Activated CD4-positive, alpha-beta T cell treated with anti-CD3 and anti-CD28 coated beads for 36 hours (primary cell): ENCODE measurements at regions of chr7 and their contacts with region 1.

Region 1: GRCh38 chr7:144437370-144438191 is 34.1 kb upstream of the NOBOX start:
- DNase-seq: peak; percentile 75
- ATAC-seq: peak; percentile 86
- H3K4me3 Mint-ChIP-seq: no peak overlapping the region
- H3K27ac Mint-ChIP-seq: no peak overlapping the region
- H3K4me1 Mint-ChIP-seq: no peaks in the 10 kb centered on the region
- H3K27me3 Mint-ChIP-seq: no peaks in the 10 kb centered on the region

Region 2: DNA sequence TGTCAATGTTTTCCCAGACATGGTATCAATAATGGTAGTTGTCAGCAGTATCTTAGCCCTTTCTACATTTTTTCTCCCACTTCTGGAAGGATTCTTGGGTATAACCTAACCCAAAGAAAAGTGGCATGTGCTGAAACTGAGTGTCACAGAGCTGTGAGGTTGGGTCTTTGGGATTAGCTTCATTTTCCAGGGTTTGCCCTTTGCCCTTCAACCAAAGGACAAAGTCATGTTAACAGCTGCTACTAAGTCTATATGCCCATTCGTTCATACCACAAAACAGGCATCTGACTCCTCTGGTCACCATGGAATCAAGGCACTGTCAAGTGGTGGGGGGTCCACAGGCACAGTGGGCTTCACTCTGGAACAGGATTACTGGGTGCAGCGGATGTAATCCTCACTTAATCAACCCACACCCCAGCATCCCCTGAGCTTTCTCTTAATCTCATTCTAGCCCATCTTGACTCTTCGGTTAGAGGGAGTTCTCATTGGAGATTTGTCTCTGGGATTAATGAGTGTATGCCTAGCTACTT is 709.2 kb before region 1 on chr7:
- CTCF ChIA-PET with region 1: no interaction called
- POLR2A ChIA-PET with region 1: no interaction called
- intact Hi-C with region 1: no loop called
- DNase-seq: no peak
- ATAC-seq: no peak
- H3K4me3 Mint-ChIP-seq: no peak overlapping the region
- H3K27ac Mint-ChIP-seq: no peak overlapping the region
- H3K4me1 Mint-ChIP-seq: peaks cover under 1% of the 10 kb centered on the region
- H3K27me3 Mint-ChIP-seq: no peaks in the 10 kb centered on the region

Region 3: GRCh38 chr7:144174613-144175012 is 263.0 kb before region 1 on chr7:
- CTCF ChIA-PET with region 1: interaction called, 3 read pairs
- POLR2A ChIA-PET with region 1: no interaction called
- intact Hi-C with region 1: loop called in 1 of 2 experiments (anchors 5 kb)
- DNase-seq: no peak
- ATAC-seq: no peak
- H3K4me3 Mint-ChIP-seq: no peak overlapping the region
- H3K27ac Mint-ChIP-seq: no peak overlapping the region
- H3K4me1 Mint-ChIP-seq: no peaks in the 10 kb centered on the region
- H3K27me3 Mint-ChIP-seq: peaks cover 5% of the 10 kb centered on the region

Region 4: DNA sequence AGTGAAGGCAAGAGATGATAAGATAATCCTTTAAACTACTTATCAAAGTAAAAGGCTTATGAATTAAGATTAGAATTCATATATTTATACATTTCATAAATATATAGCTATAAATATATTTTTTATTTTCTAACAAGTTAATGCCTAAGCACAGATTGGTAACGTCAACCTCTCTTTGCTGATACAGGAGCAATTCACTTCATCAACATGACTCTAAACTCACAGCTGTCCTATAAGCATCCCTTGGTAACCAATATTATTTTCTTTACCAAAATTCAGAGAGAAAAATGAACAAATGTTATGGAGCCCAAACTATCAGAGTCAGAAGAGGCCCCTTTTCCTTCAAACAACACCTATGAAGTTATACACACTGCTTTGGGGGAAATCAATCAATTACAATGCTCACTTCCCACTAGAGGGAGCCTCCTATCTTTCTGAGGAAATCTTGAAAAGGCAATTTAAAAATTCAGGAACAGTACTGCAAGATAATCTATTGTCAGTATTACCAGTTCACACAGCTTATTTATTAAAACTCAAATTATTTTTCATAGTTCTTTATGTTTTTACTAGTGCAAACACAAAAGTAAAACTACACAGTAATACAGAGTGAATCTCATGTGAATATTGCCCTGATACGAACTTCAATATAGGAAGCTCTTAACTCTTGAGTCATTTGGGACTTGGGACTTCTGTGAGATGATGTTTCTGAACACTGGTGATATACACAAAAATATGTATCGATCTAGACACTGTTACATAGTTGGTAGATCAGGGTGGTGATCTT is 16.9 kb after region 1 on chr7:
- CTCF ChIA-PET with region 1: no interaction called
- POLR2A ChIA-PET with region 1: no interaction called
- intact Hi-C with region 1: loop called in 1 of 2 experiments (anchors 1 kb)
- DNase-seq: no peak
- ATAC-seq: no peak
- H3K4me3 Mint-ChIP-seq: no peak overlapping the region
- H3K27ac Mint-ChIP-seq: no peak overlapping the region
- H3K4me1 Mint-ChIP-seq: no peaks in the 10 kb centered on the region
- H3K27me3 Mint-ChIP-seq: no peaks in the 10 kb centered on the region